Tibial artery (tissue), 4 donors: ENCODE measurements at regions of chr2 and their contacts with region 1.

Region 1: GRCh38 chr2:157321466-157321865 is 4.2 kb downstream of the ERMN start:
- DNase-seq: no peak
- H3K4me3 ChIP-seq: no peak overlapping the region
- H3K27ac ChIP-seq: no peak overlapping the region
- H3K4me1 ChIP-seq: no peaks in the 10 kb centered on the region
- H3K27me3 ChIP-seq: no peaks in the 10 kb centered on the region
- CTCF ChIP-seq: no peak

Region 2: DNA sequence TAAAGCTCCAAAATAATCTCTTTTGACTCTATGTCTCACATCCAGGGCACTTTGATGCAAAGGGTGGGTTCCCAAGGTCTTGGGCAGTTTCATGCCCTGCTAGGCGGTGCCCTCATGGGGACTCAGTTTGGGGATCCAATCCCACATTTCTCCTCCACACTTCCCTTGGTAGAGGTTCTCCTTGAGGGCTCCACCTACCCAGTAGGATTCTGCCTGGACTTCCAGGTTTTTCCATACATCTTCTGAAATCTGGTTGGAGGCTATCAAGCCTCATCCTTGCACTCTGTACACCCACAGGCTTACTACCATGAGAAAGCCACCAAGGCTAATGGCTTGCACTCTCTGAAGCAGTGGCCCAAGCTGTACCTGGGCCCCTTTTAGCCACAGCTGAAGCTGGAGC is 53.9 kb after region 1 on chr2:
- intact Hi-C with region 1: no loop called
- DNase-seq: no peak
- H3K4me3 ChIP-seq: no peak overlapping the region
- H3K27ac ChIP-seq: no peak overlapping the region
- H3K4me1 ChIP-seq: peaks cover 0 to 7% (median 0%) of the 10 kb centered on the region in 4 donors
- H3K27me3 ChIP-seq: no peaks in the 10 kb centered on the region
- CTCF ChIP-seq: no peak

Region 3: GRCh38 chr2:157592948-157593347 is 271.5 kb after region 1 on chr2:
- intact Hi-C with region 1: loop called (anchors 5 kb)
- DNase-seq: no peak
- H3K4me3 ChIP-seq: no peak overlapping the region
- H3K27ac ChIP-seq: no peak overlapping the region
- H3K4me1 ChIP-seq: peaks cover 0 to 14% (median 3%) of the 10 kb centered on the region in 4 donors
- H3K27me3 ChIP-seq: peaks cover 0 to 7% of the 10 kb centered on the region in 2 donors
- CTCF ChIP-seq: no peak